ENCODE measurements at regions of chr1 and their contacts with region 1.

Region 1: GRCh38 chr1:77929806-77930205 is 41.4 kb downstream of the NEXN start:
- DNase-seq: no peak

Region 2: GRCh38 chr1:77238462-77238861 is 691.3 kb before region 1 on chr1:
- intact Hi-C with region 1: loop called (anchors 5 kb)
- DNase-seq: no peak

Region 3: GRCh38 chr1:77825131-77825709 is 104.6 kb before region 1 on chr1:
- intact Hi-C with region 1: no loop called
- DNase-seq: no peak

Measured in posterior cingulate gyrus (tissue), 11 donors.